ENCODE measurements at regions of chr13 and their contacts with region 1.

Region 1: GRCh38 chr13:74287724-74288169 is 153.5 kb upstream of the KLF12 start:
- DNase-seq: peak; percentile 88
- H3K4me3 Mint-ChIP-seq: peak overlapping the region; percentile 59
- H3K27ac Mint-ChIP-seq: peak overlapping the region; percentile 30
- H3K4me1 Mint-ChIP-seq: peaks cover 66% of the 10 kb centered on the region
- H3K27me3 Mint-ChIP-seq: no peaks in the 10 kb centered on the region

Region 2: DNA sequence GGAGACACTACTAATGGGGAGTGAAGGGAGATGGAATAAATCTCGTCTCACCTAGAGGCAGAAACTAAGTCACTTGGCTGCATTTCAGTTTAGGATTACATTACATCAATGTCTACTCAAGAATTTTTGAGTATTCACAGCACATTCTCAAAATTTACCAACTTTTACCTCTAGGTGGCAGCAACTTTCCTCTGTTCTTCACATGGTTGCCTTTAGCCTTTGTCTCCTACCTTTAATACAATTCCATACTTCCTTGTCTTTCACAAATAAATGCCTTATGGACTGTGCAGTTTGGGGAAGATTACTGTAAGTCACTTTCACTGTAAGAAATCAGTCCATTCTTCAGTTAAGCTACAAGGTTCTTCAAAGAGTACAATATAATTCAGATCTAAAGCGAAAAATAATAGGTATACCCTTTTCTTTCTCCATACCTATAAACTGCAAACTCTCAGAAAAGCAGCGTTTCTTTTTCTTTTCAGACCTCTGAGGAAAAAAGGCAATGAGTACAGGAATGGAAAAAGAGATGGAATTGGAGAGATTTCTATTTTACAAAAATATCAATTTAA is 532.9 kb before region 1 on chr13:
- CTCF ChIA-PET with region 1: interaction called, 19 read pairs
- POLR2A ChIA-PET with region 1: no interaction called
- intact Hi-C with region 1: loop called (anchors 1 kb)
- DNase-seq: no peak
- H3K4me3 Mint-ChIP-seq: no peak overlapping the region
- H3K27ac Mint-ChIP-seq: no peak overlapping the region
- H3K4me1 Mint-ChIP-seq: peaks cover 30% of the 10 kb centered on the region
- H3K27me3 Mint-ChIP-seq: no peaks in the 10 kb centered on the region

Region 3: GRCh38 chr13:73938375-73939070 is 349.2 kb before region 1 on chr13:
- CTCF ChIA-PET with region 1: interaction called, 6 read pairs
- POLR2A ChIA-PET with region 1: no interaction called
- intact Hi-C with region 1: loop called (anchors 2 kb)
- DNase-seq: no peak
- H3K4me3 Mint-ChIP-seq: no peak overlapping the region
- H3K27ac Mint-ChIP-seq: no peak overlapping the region
- H3K4me1 Mint-ChIP-seq: peaks cover 77% of the 10 kb centered on the region
- H3K27me3 Mint-ChIP-seq: no peaks in the 10 kb centered on the region

Region 4: DNA sequence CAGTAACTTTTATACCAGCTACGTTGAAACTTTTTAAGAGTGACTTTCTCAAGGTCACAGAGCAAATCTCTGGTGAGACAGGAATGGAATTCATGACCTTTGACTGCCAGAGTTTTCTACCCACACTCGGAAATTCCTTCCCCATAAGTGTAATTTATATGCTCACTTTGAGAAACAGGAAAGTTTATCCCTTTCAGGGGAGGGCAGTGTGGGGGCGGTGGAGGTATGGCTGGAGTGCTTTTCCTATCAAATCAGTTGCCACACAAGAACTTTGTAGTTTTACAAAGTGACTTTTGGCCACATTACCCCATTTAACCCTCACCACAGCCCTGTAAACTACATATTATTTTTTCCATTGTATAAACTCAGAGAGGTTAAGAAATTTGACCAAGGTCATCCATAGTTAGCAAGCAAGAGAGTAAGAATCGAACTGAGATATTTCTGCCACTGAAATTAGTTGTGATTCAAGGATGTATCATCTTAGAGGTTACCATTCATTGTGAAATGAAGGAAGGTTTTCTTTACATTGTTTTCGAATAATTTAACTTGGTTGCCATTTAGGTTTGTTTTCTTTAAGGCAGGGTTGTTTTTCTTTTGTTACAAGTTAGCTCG is 159.5 kb before region 1 on chr13:
- CTCF ChIA-PET with region 1: interaction called, 13 read pairs
- POLR2A ChIA-PET with region 1: interaction called, 21 read pairs
- intact Hi-C with region 1: no loop called
- DNase-seq: peak; percentile 56
- H3K4me3 Mint-ChIP-seq: peak overlapping the region; percentile 60
- H3K27ac Mint-ChIP-seq: peak overlapping the region; percentile 87
- H3K4me1 Mint-ChIP-seq: peaks cover 72% of the 10 kb centered on the region
- H3K27me3 Mint-ChIP-seq: no peaks in the 10 kb centered on the region

Region 5: GRCh38 chr13:74246487-74246886 is 41.3 kb before region 1 on chr13:
- CTCF ChIA-PET with region 1: interaction called, 8 read pairs
- POLR2A ChIA-PET with region 1: interaction called, 4 read pairs
- intact Hi-C with region 1: loop called (anchors 1 kb)
- DNase-seq: peak; percentile 47
- H3K4me3 Mint-ChIP-seq: peak overlapping the region; percentile 58
- H3K27ac Mint-ChIP-seq: peak overlapping the region; percentile 40
- H3K4me1 Mint-ChIP-seq: peaks cover 95% of the 10 kb centered on the region
- H3K27me3 Mint-ChIP-seq: no peaks in the 10 kb centered on the region

Region 6: DNA sequence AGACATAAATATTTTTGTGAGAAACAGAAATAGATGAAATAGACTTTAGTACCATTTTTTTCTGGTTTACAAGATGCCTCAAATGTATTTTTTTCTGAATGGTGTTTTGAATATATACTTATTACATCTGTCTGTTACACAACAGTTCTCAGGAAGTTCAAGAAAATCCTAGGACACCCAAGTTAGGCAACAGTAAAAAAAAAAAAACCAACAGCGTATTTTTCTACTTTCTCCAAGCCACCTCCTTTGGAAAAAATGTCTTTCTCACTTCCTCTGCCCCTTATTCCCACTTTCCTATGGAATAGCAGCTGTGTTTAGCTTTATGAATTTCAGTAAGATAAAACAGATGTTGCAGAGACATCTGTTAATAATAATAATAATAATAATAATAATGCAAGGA is 336.0 kb after region 1 on chr13:
- CTCF ChIA-PET with region 1: no interaction called
- POLR2A ChIA-PET with region 1: no interaction called
- intact Hi-C with region 1: no loop called
- DNase-seq: no peak
- H3K4me3 Mint-ChIP-seq: no peak overlapping the region
- H3K27ac Mint-ChIP-seq: no peak overlapping the region
- H3K4me1 Mint-ChIP-seq: no peaks in the 10 kb centered on the region
- H3K27me3 Mint-ChIP-seq: peaks cover 6% of the 10 kb centered on the region